AG04450 (cell line): ENCODE measurements at regions of chr1 and their contacts with region 1.

Region 1: DNA sequence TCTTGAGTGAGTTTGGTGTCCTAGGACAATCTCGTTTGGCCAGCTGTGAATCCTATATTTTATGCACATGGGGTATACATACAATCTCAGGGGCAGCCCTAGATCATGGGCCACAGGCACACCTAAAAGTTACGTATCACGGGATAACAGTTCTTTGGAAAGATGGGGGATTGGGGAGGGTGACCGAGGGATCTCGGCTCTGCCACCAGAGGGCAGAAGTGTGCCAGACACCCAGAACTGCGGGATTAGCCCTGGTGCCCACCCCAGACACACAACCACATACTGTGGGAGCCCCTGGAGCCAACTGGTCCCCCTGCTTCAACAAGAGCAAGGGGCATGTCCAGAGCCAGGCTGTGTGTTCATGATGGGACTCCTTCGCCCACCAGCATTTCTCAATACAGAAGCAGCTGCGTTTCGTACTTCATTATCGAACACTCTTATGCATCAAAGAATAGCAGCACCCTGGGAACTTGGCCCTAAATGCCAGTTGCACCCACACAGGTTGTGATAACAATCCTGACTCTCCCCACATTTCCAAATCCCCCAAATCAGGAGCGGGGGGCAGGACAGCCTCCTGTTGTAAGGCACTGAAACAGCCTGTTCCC is 37.4 kb downstream of the TMCO4 start:
- DNase-seq: no peak
- H3K4me3 ChIP-seq: no peak overlapping the region
- H3K27ac ChIP-seq: no peak overlapping the region
- H3K27me3 ChIP-seq: no peaks in the 10 kb centered on the region
- CTCF ChIP-seq: peak; percentile 81

Region 2: GRCh38 chr1:19628879-19629278 is 133.4 kb before region 1 on chr1:
- CTCF ChIA-PET with region 1: no interaction called
- POLR2A ChIA-PET with region 1: no interaction called
- DNase-seq: no peak
- H3K4me3 ChIP-seq: no peak overlapping the region
- H3K27ac ChIP-seq: no peak overlapping the region
- H3K27me3 ChIP-seq: no peaks in the 10 kb centered on the region
- CTCF ChIP-seq: no peak

Region 3: GRCh38 chr1:19651141-19651737 is 111.0 kb before region 1 on chr1:
- CTCF ChIA-PET with region 1: no interaction called
- POLR2A ChIA-PET with region 1: no interaction called
- DNase-seq: no peak
- H3K4me3 ChIP-seq: no peak overlapping the region
- H3K27ac ChIP-seq: peak overlapping the region; percentile 21
- H3K27me3 ChIP-seq: no peaks in the 10 kb centered on the region
- CTCF ChIP-seq: peak; percentile 83

Region 4: DNA sequence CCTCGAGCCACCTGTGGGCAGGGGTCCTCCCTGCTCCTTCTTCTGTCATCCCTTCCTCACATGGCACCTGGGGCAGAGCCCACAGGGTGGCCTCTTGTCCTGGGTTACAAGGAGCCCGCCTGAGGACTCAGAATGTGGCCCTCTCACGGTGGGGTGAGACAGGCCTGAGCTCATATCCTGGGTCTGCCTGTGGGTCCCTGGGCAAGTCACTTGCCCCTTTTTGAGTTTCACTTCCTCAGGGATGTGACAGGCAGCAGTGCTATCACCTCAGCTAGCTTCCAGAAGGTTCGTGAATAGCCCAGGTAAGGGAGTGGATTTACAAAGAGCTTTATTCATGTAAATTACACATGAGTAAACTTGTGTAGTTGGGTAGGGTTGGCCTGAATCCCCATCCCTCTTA is 64.1 kb before region 1 on chr1:
- CTCF ChIA-PET with region 1: no interaction called
- POLR2A ChIA-PET with region 1: no interaction called
- DNase-seq: no peak
- H3K4me3 ChIP-seq: no peak overlapping the region
- H3K27ac ChIP-seq: no peak overlapping the region
- H3K27me3 ChIP-seq: no peaks in the 10 kb centered on the region
- CTCF ChIP-seq: no peak

Region 5: DNA sequence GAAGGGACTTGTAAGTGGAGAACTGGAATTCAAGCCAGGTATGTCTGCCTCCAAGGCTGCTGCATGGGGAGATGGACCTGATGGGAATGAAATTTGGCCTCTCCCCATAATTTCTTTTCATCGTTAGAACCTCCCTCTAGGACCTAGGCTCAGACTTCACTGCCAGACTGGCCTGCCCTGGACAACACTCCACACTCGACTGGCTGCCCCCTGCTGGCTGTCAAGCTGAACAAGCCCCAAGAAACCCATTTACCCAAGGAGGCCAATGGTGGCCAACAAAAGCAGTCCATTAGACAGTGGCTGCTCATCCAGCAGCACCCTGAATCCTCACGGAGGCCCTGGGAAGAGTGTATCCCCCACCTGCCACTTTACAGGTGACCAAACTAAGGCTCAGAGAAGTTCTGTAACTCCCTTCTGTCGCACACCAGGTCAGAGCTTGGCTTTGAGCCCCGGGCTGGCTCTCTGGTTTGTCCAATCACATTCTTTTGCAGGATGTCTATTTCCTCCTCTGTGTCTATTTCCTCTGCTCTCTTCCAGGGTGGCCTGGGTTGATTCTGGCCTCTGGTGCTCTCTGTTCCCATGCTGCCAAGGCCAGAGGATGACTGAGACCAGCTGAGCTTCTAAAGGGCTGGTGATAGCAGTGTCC is 49.1 kb after region 1 on chr1:
- CTCF ChIA-PET with region 1: interaction called, 11 read pairs
- POLR2A ChIA-PET with region 1: no interaction called
- DNase-seq: no peak
- H3K4me3 ChIP-seq: no peak overlapping the region
- H3K27ac ChIP-seq: no peak overlapping the region
- H3K27me3 ChIP-seq: peaks cover 6% of the 10 kb centered on the region
- CTCF ChIP-seq: peak; percentile 68

Region 6: DNA sequence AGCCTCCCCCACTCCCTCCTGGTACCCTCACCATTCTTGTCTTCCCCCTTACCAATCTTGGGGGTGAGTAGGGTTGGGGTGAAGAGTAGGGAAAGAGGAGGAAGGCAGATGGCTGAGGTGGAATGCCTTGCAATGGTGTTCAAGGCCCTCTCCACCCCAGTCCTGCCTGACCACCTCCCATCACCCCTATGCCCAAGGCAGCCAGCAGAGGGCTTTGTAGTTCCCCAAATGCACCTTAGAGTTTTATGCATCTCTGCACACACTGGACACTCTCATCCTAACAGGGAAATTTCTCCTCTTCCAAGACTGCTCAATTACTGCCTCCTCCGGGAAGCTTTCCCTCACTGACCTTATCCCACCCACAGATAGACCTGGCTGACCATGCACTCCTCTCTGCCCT is 940.1 kb after region 1 on chr1:
- CTCF ChIA-PET with region 1: no interaction called
- POLR2A ChIA-PET with region 1: no interaction called
- DNase-seq: no peak
- H3K4me3 ChIP-seq: no peak overlapping the region
- H3K27ac ChIP-seq: no peak overlapping the region
- H3K27me3 ChIP-seq: no peaks in the 10 kb centered on the region
- CTCF ChIP-seq: peak; percentile 66